ENCODE measurements at regions of chr13 and their contacts with region 1.

Region 1: DNA sequence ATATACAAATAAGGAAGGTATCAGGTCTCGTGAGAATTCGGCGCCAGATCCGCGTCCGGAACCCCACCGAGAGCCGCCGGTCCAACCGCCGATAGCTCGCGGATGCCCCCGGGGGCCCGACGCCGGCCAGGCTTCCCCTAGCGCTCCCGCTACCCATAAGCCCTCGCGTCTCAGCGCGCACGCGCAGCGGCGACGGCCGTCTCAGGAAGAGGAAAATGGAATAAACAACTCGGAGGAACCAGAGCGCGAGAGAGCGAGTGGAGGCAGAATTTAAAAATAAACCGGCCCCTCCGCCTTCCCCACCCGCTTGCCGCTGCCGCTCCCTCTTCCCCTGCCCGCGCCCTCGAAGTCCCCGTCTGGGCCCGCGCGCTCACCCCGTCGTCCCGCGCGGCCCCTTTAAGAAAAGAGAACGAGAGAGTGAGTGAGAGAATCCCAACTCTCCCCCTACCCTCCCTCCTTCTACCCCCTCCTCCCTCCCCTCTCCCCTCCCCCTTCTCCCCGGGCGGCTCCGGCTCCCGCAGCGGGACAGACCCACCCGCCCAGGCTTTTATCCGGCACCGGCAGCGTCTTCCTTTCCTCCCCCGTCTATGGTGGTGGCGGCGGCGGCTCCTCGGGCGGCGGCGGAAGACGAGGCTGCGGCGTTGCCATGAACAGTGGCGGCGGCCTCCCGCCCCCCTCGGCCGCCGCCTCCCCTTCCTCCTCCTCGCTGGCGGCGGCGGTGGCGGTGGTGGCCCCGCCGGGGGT is at the start of gene PAN3:
- DNase-seq: peak; percentile 93 to 95
- H3K4me3 ChIP-seq: peak within 1 kb of the TSS; percentile 92 to 94
- H3K27ac ChIP-seq: peak within 1 kb of the TSS; percentile 96 to 98
- H3K4me1 ChIP-seq: peaks cover 0 to 40% (median 11%) of the 10 kb centered on the region in 4 donors
- H3K27me3 ChIP-seq: no peaks in the 10 kb centered on the region
- CTCF ChIP-seq: no peak

Region 2: GRCh38 chr13:28641605-28641937 is 503.4 kb after region 1 on chr13:
- intact Hi-C with region 1: loop called (anchors 10 kb)
- DNase-seq: no peak
- H3K4me3 ChIP-seq: no peak overlapping the region
- H3K27ac ChIP-seq: peak overlapping the region; percentile 61 to 70
- H3K4me1 ChIP-seq: peaks cover 0 to 23% (median 5%) of the 10 kb centered on the region in 4 donors
- H3K27me3 ChIP-seq: no peaks in the 10 kb centered on the region
- CTCF ChIP-seq: no peak